Transverse colon (tissue), 4 donors: ENCODE measurements at regions of chr2 and their contacts with region 1.

Region 1: DNA sequence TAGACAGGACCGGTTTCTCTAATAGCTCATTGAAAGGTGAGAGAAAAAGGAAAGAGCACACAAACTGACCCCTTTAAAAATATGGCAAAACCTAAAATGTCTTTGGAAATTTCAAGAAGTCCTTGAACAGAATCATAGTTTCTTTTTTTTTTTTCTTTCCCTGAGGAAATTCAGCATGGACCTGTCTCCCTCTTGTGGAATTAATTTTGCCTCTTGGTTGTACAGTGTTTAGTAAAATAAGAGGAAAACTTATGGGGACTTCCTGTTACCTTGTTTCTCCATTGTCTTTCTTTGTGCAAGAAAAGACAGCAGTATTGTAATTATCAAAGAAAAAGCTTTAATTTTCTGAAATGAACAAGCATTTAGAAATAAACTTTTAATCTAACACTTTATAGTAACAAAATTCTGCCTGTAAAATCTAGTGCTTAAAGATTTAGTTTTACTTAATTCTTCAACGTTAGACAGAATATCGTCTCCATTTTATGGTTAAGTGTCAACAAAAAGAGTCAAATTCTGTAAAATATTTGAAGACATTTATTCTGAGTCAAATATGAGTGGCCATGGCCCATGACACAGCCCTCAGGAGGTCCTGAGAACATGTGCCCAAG is 176.3 kb upstream of the NABP1 start:
- DNase-seq: no peak
- H3K4me3 ChIP-seq: no peak overlapping the region
- H3K27ac ChIP-seq: no peak overlapping the region
- H3K4me1 ChIP-seq: peaks cover 0 to 4% (median 1%) of the 10 kb centered on the region in 4 donors
- H3K27me3 ChIP-seq: no peaks in the 10 kb centered on the region
- CTCF ChIP-seq: peak; percentile 50 to 72 (median 59)
- EP300 ChIP-seq: no peak
- POLR2A ChIP-seq: no peak

Region 2: DNA sequence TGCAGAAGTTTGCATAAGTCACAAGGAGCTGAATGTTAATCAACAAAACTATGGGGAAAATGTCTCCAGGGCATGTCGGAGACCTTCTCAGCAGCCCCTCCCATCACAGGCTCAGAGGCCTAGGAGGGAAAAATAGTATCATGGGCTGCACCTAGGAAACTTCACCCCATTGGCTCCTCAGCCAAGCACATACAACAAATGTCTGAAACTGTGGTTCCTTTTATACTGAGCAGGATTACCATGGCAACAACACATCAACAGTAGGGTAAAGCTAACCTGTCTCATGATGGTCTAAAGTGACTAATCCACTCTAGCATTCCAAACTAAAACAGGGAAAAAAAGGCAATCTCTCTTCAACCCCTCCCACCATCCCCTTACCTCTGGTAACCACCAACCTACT is 963.9 kb before region 1 on chr2:
- in situ Hi-C with region 1: no loop called
- intact Hi-C with region 1: no loop called
- DNase-seq: no peak
- H3K4me3 ChIP-seq: no peak overlapping the region
- H3K27ac ChIP-seq: no peak overlapping the region
- H3K4me1 ChIP-seq: peaks cover 0 to 16% (median 14%) of the 10 kb centered on the region in 4 donors
- H3K27me3 ChIP-seq: no peaks in the 10 kb centered on the region
- CTCF ChIP-seq: no peak
- EP300 ChIP-seq: no peak
- POLR2A ChIP-seq: no peak

Region 3: DNA sequence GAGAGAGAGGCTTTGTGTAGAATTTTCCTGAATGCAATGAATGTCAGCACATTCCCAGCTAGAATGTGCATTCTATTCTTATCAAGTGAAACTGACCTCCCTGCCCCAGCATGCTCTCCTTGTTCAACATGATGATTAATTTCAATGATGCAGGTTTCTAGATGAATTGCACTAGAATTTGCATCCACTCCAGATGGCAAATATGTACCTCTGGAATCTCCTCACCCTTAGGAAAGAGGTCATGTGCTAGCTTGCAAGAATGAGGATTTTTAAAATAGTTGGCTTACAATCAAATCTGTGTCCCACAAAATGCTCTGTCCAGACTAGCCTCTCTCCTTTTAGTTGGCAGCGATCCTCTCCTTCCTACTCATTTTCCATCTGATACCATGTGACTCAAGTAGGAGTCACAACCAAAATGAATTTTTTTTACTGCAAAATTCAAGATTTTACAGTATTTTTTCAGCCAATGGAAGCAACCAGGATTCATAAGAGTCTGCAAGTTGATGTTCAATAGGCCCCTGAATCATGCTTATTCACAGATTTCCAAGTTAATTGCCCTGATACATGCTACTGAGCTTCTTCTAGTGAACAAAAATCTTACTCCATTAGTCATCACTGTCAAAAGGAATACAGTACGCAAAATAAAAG is 329.8 kb before region 1 on chr2:
- in situ Hi-C with region 1: loop called in 3 of 4 experiments (anchors 10 to 25 kb)
- intact Hi-C with region 1: no loop called
- DNase-seq: no peak
- H3K4me3 ChIP-seq: no peak overlapping the region
- H3K27ac ChIP-seq: no peak overlapping the region
- H3K4me1 ChIP-seq: peaks cover 0 to 41% (median 14%) of the 10 kb centered on the region in 4 donors
- H3K27me3 ChIP-seq: no peaks in the 10 kb centered on the region
- CTCF ChIP-seq: no peak
- EP300 ChIP-seq: no peak
- POLR2A ChIP-seq: no peak

Region 4: GRCh38 chr2:191218292-191218898 is 283.3 kb before region 1 on chr2:
- in situ Hi-C with region 1: loop called in 1 of 4 experiments (anchors 10 kb)
- intact Hi-C with region 1: no loop called
- DNase-seq: peak; percentile 41
- H3K4me3 ChIP-seq: no peak overlapping the region
- H3K27ac ChIP-seq: no peak overlapping the region
- H3K4me1 ChIP-seq: peaks cover 0 to 26% (median 18%) of the 10 kb centered on the region in 4 donors
- H3K27me3 ChIP-seq: no peaks in the 10 kb centered on the region
- CTCF ChIP-seq: peak; percentile 40 to 57 (median 52)
- EP300 ChIP-seq: no peak
- POLR2A ChIP-seq: no peak

Region 5: DNA sequence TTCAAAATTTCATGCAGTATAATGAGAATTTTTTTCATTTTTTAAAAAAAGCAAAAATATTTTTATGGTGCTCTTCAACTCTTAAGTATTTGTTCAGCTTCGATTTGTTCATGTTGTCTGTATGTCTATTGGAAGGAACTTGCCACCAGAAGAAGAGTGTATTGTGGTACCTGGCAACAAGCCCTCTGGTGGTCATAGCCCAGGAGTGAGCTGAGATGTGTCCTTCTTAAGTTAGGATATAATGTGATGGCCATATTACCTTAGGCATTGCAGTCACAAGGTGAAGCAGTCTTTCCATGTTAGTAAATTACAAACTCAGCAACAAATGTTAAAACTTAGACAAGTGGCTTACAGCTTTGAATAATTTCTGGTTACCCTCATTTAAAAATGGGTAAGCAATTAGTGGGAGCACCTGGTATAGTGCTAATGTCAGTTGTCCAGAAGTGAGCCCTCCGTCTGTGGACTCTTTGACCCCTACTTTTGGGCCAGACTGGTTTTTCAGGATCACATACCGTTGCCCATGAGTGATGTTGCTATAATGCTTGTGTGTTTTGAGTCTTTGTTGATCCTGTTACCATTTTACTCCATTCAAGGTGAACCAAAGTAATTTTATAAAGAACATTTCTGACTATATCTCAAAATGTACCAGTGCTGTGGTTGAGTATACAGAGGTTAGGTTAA is 199.1 kb before region 1 on chr2:
- in situ Hi-C with region 1: no loop called
- intact Hi-C with region 1: no loop called
- DNase-seq: no peak
- H3K4me3 ChIP-seq: no peak overlapping the region
- H3K27ac ChIP-seq: no peak overlapping the region
- H3K4me1 ChIP-seq: peaks cover 6 to 31% (median 19%) of the 10 kb centered on the region in 4 donors
- H3K27me3 ChIP-seq: no peaks in the 10 kb centered on the region
- CTCF ChIP-seq: peak in 2 of 5 experiments; percentile 12 to 13
- EP300 ChIP-seq: no peak
- POLR2A ChIP-seq: no peak